HEK293 (cell line): ENCODE measurements at regions of chr13 and their contacts with region 1.

Region 1: GRCh38 chr13:95834134-95834765 is 157.3 kb downstream of the DNAJC3 start:
- H3K4me3 ChIP-seq: no peak overlapping the region
- H3K27ac ChIP-seq: no peak overlapping the region
- H3K4me1 ChIP-seq: no peaks in the 10 kb centered on the region
- CTCF ChIP-seq: no peak

Region 2: DNA sequence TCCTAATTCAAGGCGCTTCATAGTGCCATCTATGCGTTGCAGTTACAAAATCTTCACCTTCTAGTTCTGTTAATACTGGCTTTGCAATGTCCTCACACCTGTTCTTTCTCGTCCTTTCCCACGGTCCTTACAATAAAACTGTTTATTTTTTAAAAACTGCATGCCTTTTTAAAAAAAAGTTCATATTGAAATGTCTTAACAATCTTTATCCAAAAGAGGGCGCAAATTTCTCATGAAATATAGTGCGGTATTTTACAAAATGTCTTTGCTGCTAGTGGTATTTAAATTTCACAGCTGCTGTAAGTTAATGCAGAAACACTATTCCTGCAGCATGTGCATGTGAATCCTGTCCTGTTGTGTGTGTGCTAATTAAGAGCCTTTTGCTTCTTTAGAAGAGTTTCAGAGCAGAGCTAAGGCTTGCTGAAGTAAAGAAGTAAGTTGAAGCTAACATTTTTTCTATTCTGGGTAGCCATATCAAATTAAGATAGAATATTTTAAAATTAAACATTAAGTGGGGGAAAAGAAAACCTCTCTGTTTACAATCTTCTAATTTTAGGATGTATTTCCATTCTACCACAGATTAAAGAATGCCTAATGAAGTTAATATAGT is 297.5 kb before region 1 on chr13:
- CTCF ChIA-PET with region 1: interaction called, 10 read pairs
- POLR2A ChIA-PET with region 1: no interaction called
- H3K4me3 ChIP-seq: no peak overlapping the region
- H3K27ac ChIP-seq: no peak overlapping the region
- H3K4me1 ChIP-seq: peaks cover 2% of the 10 kb centered on the region; the same call in 1 of the 2 replicates
- CTCF ChIP-seq: no peak

Region 3: GRCh38 chr13:95624020-95624419 is 210.2 kb before region 1 on chr13:
- CTCF ChIA-PET with region 1: interaction called, 90 read pairs
- POLR2A ChIA-PET with region 1: interaction called, 3 read pairs
- H3K4me3 ChIP-seq: no peak overlapping the region
- H3K27ac ChIP-seq: no peak overlapping the region
- H3K4me1 ChIP-seq: no peaks in the 10 kb centered on the region
- CTCF ChIP-seq: no peak

Region 4: GRCh38 chr13:95822303-95822702 is 11.9 kb before region 1 on chr13:
- CTCF ChIA-PET with region 1: interaction called, 75 read pairs
- POLR2A ChIA-PET with region 1: no interaction called
- H3K4me3 ChIP-seq: no peak overlapping the region
- H3K27ac ChIP-seq: no peak overlapping the region
- H3K4me1 ChIP-seq: no peaks in the 10 kb centered on the region
- CTCF ChIP-seq: no peak

Region 5: DNA sequence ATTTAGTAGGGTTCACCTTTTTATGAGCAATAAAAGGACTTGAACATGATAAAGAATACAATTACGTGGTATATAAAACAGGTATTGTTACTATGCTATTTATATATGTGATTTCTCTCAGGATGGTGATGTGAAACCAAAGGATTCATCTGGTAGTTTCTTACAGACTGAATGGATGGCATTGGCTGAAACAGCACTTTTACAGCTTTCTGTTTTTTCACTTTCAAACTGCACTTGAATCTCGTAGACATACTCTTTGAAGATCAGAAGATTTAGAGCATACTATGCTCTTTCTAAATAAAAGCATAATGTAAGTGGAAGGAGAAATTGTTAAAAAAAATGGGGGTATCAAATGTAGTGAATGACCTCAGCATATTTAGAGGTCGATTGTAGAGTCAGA is 610.4 kb after region 1 on chr13:
- CTCF ChIA-PET with region 1: no interaction called
- POLR2A ChIA-PET with region 1: no interaction called
- H3K4me3 ChIP-seq: no peak overlapping the region
- H3K27ac ChIP-seq: no peak overlapping the region
- H3K4me1 ChIP-seq: no peaks in the 10 kb centered on the region
- CTCF ChIP-seq: no peak